ENCODE measurements at regions of chr21 and their contacts with region 1.

Region 1: DNA sequence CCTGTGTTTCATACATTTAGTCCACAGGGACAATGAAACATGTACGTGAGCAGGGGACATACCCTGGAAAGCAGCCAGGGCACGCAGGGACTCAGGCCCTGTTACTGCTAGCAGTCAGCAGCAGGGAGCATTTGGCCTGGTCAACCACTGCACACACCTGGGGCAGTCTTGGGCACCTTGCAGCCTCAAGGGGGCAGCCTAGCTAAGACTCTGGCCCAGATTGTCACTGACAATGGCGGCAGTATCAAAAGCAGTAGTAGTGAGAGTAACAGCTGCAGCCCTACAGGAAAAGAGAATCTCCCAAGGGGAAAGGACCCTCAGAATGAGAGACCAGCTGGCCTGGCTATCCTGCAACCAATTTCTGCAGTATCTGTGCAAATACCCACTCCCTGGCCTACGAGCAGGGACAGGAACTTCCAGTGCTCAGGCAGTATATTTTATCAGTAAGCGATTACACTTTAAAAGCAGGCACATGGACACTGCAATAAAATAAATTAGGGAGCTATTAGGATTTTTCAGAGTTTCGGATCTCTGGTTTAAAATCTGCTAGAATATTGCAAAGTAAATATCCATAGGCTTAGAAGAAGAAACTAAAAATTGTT is 475.6 kb downstream of the LTN1 start:
- DNase-seq: peak; percentile 61
- H3K4me3 ChIP-seq: no peak overlapping the region
- H3K27ac ChIP-seq: no peak overlapping the region
- H3K4me1 ChIP-seq: no peaks in the 10 kb centered on the region
- H3K27me3 ChIP-seq: no peaks in the 10 kb centered on the region
- CTCF ChIP-seq: peak; percentile 76

Region 2: GRCh38 chr21:27060190-27060589 is 1456.9 kb before region 1 on chr21:
- CTCF ChIA-PET with region 1: no interaction called
- POLR2A ChIA-PET with region 1: no interaction called
- intact Hi-C with region 1: no loop called
- DNase-seq: no peak
- H3K4me3 ChIP-seq: no peak overlapping the region
- H3K27ac ChIP-seq: no peak overlapping the region
- H3K4me1 ChIP-seq: no peaks in the 10 kb centered on the region
- H3K27me3 ChIP-seq: no peaks in the 10 kb centered on the region
- CTCF ChIP-seq: no peak

Region 3: GRCh38 chr21:28554660-28555475 is 37.8 kb after region 1 on chr21:
- CTCF ChIA-PET with region 1: no interaction called
- POLR2A ChIA-PET with region 1: no interaction called
- intact Hi-C with region 1: no loop called
- DNase-seq: no peak
- H3K4me3 ChIP-seq: no peak overlapping the region
- H3K27ac ChIP-seq: no peak overlapping the region
- H3K4me1 ChIP-seq: no peaks in the 10 kb centered on the region
- H3K27me3 ChIP-seq: no peaks in the 10 kb centered on the region
- CTCF ChIP-seq: no peak

Region 4: DNA sequence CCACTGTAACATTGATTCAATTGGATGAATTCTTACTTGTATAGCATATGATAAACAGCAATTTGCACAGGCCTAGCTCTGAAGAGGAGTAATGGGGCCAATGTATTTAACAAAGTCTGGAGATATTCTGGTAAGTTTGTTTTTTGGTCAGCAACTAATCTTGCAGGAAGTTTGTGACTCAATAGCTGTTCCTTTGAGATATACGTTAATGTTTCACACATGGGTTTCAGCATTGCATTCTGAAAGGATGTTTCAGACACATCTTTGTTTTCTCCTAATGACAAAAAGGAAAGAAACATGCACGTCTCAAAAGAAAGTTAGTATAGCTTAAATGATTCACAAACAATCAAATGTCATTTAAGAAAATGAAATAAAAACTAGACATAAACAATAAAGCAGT is 426.5 kb after region 1 on chr21:
- CTCF ChIA-PET with region 1: no interaction called
- POLR2A ChIA-PET with region 1: no interaction called
- intact Hi-C with region 1: loop called (anchors 10 kb)
- DNase-seq: no peak
- H3K4me3 ChIP-seq: no peak overlapping the region
- H3K27ac ChIP-seq: no peak overlapping the region
- H3K4me1 ChIP-seq: no peaks in the 10 kb centered on the region
- H3K27me3 ChIP-seq: no peaks in the 10 kb centered on the region
- CTCF ChIP-seq: no peak

Measured in A673 (cell line).